ENCODE measurements at regions of chr19 and their contacts with region 1.

Region 1: GRCh38 chr19:7562646-7563393 is 27.3 kb downstream of the PNPLA6 start:
- DNase-seq: peak; percentile 31
- ATAC-seq: no peak
- H3K4me3 Mint-ChIP-seq: no peak overlapping the region
- H3K27ac Mint-ChIP-seq: no peak overlapping the region
- H3K4me1 Mint-ChIP-seq: no peaks in the 10 kb centered on the region
- H3K27me3 Mint-ChIP-seq: no peaks in the 10 kb centered on the region

Region 2: DNA sequence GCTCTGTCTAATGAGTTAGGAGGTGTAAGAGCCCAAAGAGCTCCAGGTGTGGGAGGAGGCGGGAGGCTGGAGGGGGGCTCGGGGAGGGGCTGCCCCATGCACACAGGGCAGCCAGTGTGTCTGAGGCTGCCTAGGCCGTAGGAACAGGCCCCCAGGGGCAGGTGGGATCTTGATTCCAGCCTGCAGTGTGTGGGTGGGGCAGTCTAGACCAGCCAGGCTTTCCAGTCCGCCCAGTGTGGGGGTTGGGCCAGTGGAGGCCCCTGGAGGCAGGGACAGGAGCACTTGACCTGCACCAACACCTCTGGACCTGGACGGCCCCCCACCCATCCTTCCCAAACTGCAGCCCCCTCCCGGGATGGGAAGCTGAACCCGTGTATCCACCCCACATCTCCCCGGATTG is 27.4 kb after region 1 on chr19:
- CTCF ChIA-PET with region 1: interaction called, 12 read pairs
- POLR2A ChIA-PET with region 1: no interaction called
- intact Hi-C with region 1: loop called in 1 of 2 experiments (anchors 1 kb)
- DNase-seq: no peak
- ATAC-seq: no peak
- H3K4me3 Mint-ChIP-seq: no peak overlapping the region
- H3K27ac Mint-ChIP-seq: no peak overlapping the region
- H3K4me1 Mint-ChIP-seq: peaks cover 2% of the 10 kb centered on the region
- H3K27me3 Mint-ChIP-seq: peaks cover 18% of the 10 kb centered on the region

Region 3: DNA sequence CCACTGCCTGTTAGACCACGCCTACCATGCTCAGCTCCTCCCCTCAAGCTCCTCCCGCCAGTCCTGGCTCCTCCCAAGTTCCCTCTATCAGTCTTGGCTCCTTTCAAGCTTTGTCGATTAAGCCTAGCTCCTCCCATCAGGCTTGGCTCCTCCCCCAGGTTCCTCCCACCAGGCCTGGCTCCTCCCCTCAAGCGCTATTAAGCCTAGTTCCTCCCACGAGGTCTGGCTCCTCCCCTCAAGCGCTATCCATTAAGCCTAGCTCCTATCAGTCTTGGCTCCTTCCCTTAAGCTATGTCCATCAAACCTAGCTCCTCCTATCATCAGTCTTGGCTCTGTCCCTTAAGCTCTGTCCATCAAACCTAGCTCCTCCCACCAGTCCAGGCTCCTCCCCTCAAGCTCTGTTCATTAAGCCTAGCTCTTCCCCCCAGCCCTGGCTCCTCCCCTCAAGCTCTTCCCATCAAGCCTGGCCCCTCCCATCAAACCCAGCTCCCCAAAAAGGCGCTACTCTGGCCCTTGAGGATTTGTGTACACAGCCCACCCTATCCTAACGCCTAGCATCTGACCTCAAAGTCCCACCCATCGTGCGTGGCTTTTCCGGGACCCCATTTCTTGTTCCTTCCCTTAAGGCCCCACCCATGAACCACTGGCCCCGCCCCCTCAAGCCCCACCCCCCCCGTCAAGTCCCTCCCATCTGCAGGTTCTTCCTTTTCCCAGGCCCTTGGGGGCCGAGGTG is 42.8 kb after region 1 on chr19:
- CTCF ChIA-PET with region 1: interaction called, 14 read pairs
- POLR2A ChIA-PET with region 1: no interaction called
- intact Hi-C with region 1: no loop called
- DNase-seq: peak; percentile 66
- ATAC-seq: peak; percentile 82
- H3K4me3 Mint-ChIP-seq: no peak overlapping the region
- H3K27ac Mint-ChIP-seq: no peak overlapping the region
- H3K4me1 Mint-ChIP-seq: no peaks in the 10 kb centered on the region
- H3K27me3 Mint-ChIP-seq: peaks cover 8% of the 10 kb centered on the region

Region 4: DNA sequence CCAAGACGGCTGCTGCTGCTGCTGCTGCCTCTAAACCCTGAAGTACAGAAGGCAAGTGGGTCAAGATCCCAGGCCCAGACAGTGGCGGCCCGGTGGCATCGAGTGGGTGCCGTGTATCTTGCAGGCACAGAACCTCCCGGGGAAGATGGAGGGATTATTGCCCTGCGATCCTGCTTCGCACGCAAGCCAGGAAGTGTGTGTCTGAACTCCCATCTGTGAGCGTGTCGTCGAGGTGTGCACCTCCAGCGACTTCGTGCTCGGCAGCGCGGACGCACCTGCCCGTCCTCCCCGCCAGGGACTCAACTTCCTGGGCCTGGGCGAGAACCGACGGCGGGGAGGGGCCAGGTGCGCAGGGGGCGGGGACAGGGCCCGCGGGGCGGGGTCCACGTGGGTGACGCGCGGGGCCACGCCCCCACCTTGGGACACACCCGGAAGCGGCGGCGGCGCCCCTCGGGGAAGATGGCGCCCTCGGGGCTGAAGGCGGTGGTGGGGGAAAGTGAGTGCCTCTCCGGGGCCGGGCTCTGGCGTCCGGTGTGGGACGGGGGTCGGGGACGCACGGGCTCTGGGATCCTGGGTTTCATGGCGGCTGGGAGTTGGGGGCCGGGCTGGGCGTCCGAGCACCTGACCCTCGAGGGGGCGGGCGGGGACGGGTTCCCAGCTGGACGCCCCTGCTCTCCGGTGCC is 74.0 kb after region 1 on chr19 and contains the start of gene STXBP2:
- CTCF ChIA-PET with region 1: interaction called, 11 read pairs
- POLR2A ChIA-PET with region 1: no interaction called
- intact Hi-C with region 1: no loop called
- DNase-seq: peak; percentile 96
- ATAC-seq: peak; percentile 97
- H3K4me3 Mint-ChIP-seq: peak within 1 kb of the TSS; percentile 78
- H3K27ac Mint-ChIP-seq: peak within 1 kb of the TSS; percentile 86
- H3K4me1 Mint-ChIP-seq: peaks cover 22% of the 10 kb centered on the region
- H3K27me3 Mint-ChIP-seq: no peaks in the 10 kb centered on the region
- total RNA-seq, gene STXBP2: 75.2 to 83.0 TPM

Region 5: DNA sequence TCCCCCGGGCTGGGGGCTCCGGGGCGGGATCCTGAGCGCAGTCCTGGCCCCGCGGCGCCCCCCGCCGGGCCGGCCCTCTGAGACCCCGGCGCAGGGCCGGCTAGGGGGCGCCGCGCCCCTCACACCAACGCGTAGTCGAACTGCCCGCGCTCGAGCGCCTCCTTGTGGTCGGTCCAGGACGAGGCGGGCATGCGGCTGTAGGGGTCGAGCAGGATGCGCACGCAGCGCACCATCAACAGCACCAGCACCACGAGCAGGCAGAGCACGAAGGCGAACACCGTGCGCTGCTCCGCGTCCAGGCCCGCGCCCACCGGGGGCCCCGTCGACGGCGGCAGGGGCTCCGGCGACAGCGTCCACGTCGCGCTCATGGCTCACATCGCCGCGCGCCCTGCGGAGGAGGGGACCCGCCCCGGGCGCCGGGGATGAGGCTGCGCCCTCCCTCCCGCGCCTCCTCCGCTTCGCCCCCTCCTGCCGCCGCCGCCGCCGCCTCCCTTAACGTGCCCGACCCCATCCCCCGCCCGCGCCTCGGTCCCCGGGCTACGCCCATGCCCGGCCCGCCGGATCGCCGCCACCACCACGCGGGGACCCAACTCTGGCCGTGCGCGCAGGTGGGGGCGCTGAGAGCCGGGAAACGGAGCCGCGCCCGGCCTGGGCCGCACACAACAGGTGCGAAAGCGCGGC is 362.5 kb after region 1 on chr19:
- CTCF ChIA-PET with region 1: interaction called, 3 read pairs
- POLR2A ChIA-PET with region 1: no interaction called
- intact Hi-C with region 1: loop called in 1 of 2 experiments (anchors 1 kb)
- DNase-seq: peak; percentile 90
- ATAC-seq: peak; percentile 50
- H3K4me3 Mint-ChIP-seq: peak overlapping the region; percentile 67
- H3K27ac Mint-ChIP-seq: no peak overlapping the region
- H3K4me1 Mint-ChIP-seq: peaks cover 28% of the 10 kb centered on the region
- H3K27me3 Mint-ChIP-seq: peaks cover 1% of the 10 kb centered on the region

Measured in activated CD4-positive, alpha-beta T cell treated with anti-CD3 and anti-CD28 coated beads for 36 hours (primary cell).